ENCODE measurements at regions of chr1 and their contacts with region 1.

Region 1: GRCh38 chr1:31955917-31956736 is 18.0 kb upstream of the PTP4A2 start:
- DNase-seq: peak; percentile 79 to 97 (median 86)
- ATAC-seq: peak; percentile 89
- H3K4me3 ChIP-seq: no peak overlapping the region
- H3K27ac ChIP-seq: peak overlapping the region; percentile 88
- H3K4me1 ChIP-seq: peaks cover 47 to 48% of the 10 kb centered on the region in 2 experiments
- H3K27me3 ChIP-seq: no peaks in the 10 kb centered on the region
- CTCF ChIP-seq: peak; percentile 69 to 72 (median 70)
- EP300 ChIP-seq: peak; percentile 95
- POLR2A ChIP-seq: peak; percentile 62; the same call in 1 of the 2 replicates
- RAD21 ChIP-seq: peak; percentile 75 to 82

Region 2: GRCh38 chr1:31644560-31645273 is 311.4 kb before region 1 on chr1 and contains the start of gene PEF1:
- CTCF ChIA-PET with region 1: no interaction called
- POLR2A ChIA-PET with region 1: no interaction called
- in situ Hi-C with region 1: no loop called
- intact Hi-C with region 1: loop called (anchors 10 kb)
- DNase-seq: peak; percentile 99 to 100 (median 100)
- ATAC-seq: peak; percentile 91
- H3K4me3 ChIP-seq: peak within 1 kb of the TSS; percentile 62
- H3K27ac ChIP-seq: peak within 1 kb of the TSS; percentile 96
- H3K4me1 ChIP-seq: peaks cover 0 to 13% of the 10 kb centered on the region in 2 experiments; a peak in 3 of 5 replicates
- H3K27me3 ChIP-seq: 0 out of 5 replicates have a peak, but pooled peaks cover 0 to under 1% of the 10 kb centered on the region in 2 experiments
- CTCF ChIP-seq: no peak
- EP300 ChIP-seq: 0 out of 2 replicates have a peak, but pooled peaks have one; percentile 6
- POLR2A ChIP-seq: peak; percentile 91
- RAD21 ChIP-seq: no peak
- polyA plus RNA-seq, gene PEF1: 26.3 to 33.0 TPM

Region 3: DNA sequence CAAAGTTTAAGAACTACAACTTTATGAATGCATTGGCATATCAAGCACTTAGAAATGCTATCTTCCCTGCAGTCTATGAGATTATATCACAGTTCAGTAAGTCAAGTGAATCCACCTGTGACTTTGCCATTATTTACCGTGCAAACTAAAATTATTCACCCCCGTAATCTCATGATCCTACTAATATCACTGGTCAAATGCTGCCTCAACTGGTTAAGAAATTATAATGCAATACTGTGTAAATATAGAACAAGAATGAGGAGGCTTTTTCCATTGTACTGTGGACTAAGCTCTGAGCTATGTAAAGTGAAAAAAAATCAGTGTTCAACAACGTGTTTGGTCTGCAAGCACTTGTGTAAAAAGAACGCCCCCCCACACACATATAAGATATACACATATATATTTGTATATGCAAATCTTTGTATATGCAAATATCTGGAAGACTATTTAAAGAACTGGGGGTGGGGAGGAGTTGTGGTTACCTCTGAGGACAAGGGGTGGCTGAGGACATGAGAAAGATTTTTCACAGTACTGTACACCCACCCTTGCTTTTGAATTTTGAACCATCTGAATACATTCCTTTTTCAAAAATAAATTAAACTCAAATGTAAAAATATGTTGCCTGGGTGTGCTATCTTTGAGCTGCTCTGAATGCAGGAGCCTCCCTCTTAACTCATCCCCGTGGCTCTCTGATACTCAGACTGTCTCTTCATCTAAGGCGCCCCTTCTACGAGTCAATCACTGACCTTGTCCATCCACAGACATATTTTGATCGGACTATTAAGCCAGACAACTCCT is 75.0 kb before region 1 on chr1:
- CTCF ChIA-PET with region 1: no interaction called
- POLR2A ChIA-PET with region 1: interaction called, 3 read pairs
- in situ Hi-C with region 1: no loop called
- intact Hi-C with region 1: loop called (anchors 5 kb)
- DNase-seq: no peak
- ATAC-seq: peak; percentile 42
- H3K4me3 ChIP-seq: no peak overlapping the region
- H3K27ac ChIP-seq: no peak overlapping the region
- H3K4me1 ChIP-seq: peaks cover 6 to 29% of the 10 kb centered on the region in 2 experiments
- H3K27me3 ChIP-seq: no peaks in the 10 kb centered on the region
- CTCF ChIP-seq: no peak
- EP300 ChIP-seq: no peak
- POLR2A ChIP-seq: no peak
- RAD21 ChIP-seq: no peak

Region 4: GRCh38 chr1:31923901-31924535 is 32.1 kb before region 1 on chr1:
- CTCF ChIA-PET with region 1: no interaction called
- POLR2A ChIA-PET with region 1: interaction called, 11 read pairs
- in situ Hi-C with region 1: no loop called
- intact Hi-C with region 1: loop called (anchors 5 kb)
- DNase-seq: peak in 1 of 4 experiments; percentile 21
- ATAC-seq: no peak
- H3K4me3 ChIP-seq: no peak overlapping the region
- H3K27ac ChIP-seq: no peak overlapping the region
- H3K4me1 ChIP-seq: peaks cover 37 to 51% of the 10 kb centered on the region in 2 experiments
- H3K27me3 ChIP-seq: no peaks in the 10 kb centered on the region
- CTCF ChIP-seq: no peak
- EP300 ChIP-seq: no peak
- POLR2A ChIP-seq: no peak
- RAD21 ChIP-seq: no peak

Region 5: DNA sequence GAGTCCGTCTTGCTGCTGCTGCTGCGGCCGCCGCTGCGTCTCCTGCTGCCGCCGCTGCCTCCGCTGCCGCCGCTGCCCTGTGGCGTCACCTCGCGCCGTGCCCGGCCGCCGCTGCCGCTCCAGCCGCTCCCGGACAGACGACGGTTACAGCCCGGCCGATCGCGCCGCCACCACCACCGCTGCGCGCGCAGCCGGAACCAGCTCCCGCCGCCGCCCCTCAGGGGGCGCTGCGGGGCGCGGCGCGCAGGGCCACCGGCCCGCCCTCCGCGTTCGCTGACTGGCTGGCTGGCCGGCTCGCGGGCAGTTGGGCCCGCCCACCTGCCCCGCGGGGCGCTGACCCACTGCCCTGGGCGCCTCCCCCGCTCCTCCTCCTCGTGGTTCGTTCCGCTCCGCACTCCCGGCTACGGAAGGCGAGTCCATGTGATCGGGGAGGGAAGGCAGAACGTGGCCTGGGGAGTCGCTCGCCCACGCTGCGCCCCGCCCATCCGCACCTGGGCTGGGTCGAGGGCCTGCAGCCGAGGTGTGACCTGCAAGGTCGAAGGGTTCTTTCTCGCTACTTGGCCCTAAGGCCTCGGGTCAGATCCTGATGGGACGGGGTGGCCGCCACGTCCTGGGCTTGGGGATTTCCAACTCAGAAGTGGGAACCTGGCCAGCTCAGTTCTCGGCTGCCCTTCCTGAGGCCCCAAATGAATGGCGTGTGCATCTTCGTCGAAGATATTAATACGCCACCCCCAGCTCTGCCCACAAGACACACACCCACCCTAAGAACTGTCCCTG is 17.8 kb before region 1 on chr1 and contains the start of gene PTP4A2:
- CTCF ChIA-PET with region 1: interaction called, 5 read pairs
- POLR2A ChIA-PET with region 1: interaction called, 132 read pairs
- in situ Hi-C with region 1: no loop called
- intact Hi-C with region 1: loop called (anchors 1 kb)
- DNase-seq: peak; percentile 97 to 100 (median 98)
- ATAC-seq: peak; percentile 77
- H3K4me3 ChIP-seq: peak within 1 kb of the TSS; percentile 82
- H3K27ac ChIP-seq: peak within 1 kb of the TSS; percentile 94
- H3K4me1 ChIP-seq: peaks cover 46 to 53% of the 10 kb centered on the region in 2 experiments
- H3K27me3 ChIP-seq: no peaks in the 10 kb centered on the region
- CTCF ChIP-seq: peak in 2 of 3 experiments; percentile 79 to 82; a peak in 5 of 6 replicates
- EP300 ChIP-seq: peak; percentile 72; the same call in 1 of the 2 replicates
- POLR2A ChIP-seq: peak; percentile 71
- RAD21 ChIP-seq: peak in 1 of 2 experiments; percentile 37; a peak in 2 of 4 replicates
- polyA plus RNA-seq, gene PTP4A2: 197 to 480 TPM

Region 6: GRCh38 chr1:31944205-31945089 is 11.7 kb before region 1 on chr1:
- CTCF ChIA-PET with region 1: interaction called, 5 read pairs
- POLR2A ChIA-PET with region 1: interaction called, 132 read pairs
- in situ Hi-C with region 1: no loop called
- intact Hi-C with region 1: loop called (anchors 1 kb)
- DNase-seq: peak; percentile 94 to 100 (median 96)
- ATAC-seq: peak; percentile 91
- H3K4me3 ChIP-seq: peak overlapping the region; percentile 53
- H3K27ac ChIP-seq: peak overlapping the region; percentile 99
- H3K4me1 ChIP-seq: peaks cover 41 to 43% of the 10 kb centered on the region in 2 experiments
- H3K27me3 ChIP-seq: no peaks in the 10 kb centered on the region
- CTCF ChIP-seq: no peak
- EP300 ChIP-seq: peak; percentile 85
- POLR2A ChIP-seq: peak; percentile 96
- RAD21 ChIP-seq: peak; percentile 28 to 46; a peak in 3 of 4 replicates

Region 7: DNA sequence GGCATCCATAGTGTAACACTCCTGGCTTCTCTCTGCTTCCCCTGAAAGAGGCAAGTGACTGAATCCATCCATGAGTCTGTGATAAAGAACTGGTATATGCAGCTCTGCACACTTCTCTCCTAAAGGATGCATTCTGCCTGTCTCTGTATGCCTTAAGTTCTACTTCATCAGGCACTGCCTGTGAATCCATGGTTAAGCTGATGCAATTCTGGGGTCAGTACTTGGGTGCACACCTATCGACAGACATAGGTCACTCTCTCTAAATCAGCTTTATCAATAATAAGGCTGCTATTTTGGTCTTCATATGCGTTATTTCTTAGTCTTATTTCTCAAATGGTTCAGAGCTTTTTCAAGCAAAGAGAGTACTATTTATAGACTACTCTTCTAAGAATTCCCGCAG is 14.7 kb after region 1 on chr1:
- CTCF ChIA-PET with region 1: no interaction called
- POLR2A ChIA-PET with region 1: interaction called, 12 read pairs
- in situ Hi-C with region 1: no loop called
- intact Hi-C with region 1: no loop called
- DNase-seq: no peak
- ATAC-seq: peak; percentile 77
- H3K4me3 ChIP-seq: no peak overlapping the region
- H3K27ac ChIP-seq: no peak overlapping the region
- H3K4me1 ChIP-seq: peaks cover 0 to 3% of the 10 kb centered on the region in 2 experiments; a peak in 3 of 5 replicates
- H3K27me3 ChIP-seq: no peaks in the 10 kb centered on the region
- CTCF ChIP-seq: no peak
- EP300 ChIP-seq: no peak
- POLR2A ChIP-seq: no peak
- RAD21 ChIP-seq: no peak

Region 8: GRCh38 chr1:32151319-32151787 is 195.2 kb after region 1 on chr1:
- CTCF ChIA-PET with region 1: no interaction called
- POLR2A ChIA-PET with region 1: no interaction called
- in situ Hi-C with region 1: no loop called
- intact Hi-C with region 1: no loop called
- DNase-seq: no peak
- ATAC-seq: peak; percentile 43; the same call in 1 of the 3 replicates
- H3K4me3 ChIP-seq: no peak overlapping the region
- H3K27ac ChIP-seq: no peak overlapping the region
- H3K4me1 ChIP-seq: no peaks in the 10 kb centered on the region
- H3K27me3 ChIP-seq: no peaks in the 10 kb centered on the region
- CTCF ChIP-seq: no peak
- EP300 ChIP-seq: no peak
- POLR2A ChIP-seq: no peak
- RAD21 ChIP-seq: no peak

Measured in K562 (cell line).